ENCODE measurements at regions of chr3 and their contacts with region 1.

Region 1: DNA sequence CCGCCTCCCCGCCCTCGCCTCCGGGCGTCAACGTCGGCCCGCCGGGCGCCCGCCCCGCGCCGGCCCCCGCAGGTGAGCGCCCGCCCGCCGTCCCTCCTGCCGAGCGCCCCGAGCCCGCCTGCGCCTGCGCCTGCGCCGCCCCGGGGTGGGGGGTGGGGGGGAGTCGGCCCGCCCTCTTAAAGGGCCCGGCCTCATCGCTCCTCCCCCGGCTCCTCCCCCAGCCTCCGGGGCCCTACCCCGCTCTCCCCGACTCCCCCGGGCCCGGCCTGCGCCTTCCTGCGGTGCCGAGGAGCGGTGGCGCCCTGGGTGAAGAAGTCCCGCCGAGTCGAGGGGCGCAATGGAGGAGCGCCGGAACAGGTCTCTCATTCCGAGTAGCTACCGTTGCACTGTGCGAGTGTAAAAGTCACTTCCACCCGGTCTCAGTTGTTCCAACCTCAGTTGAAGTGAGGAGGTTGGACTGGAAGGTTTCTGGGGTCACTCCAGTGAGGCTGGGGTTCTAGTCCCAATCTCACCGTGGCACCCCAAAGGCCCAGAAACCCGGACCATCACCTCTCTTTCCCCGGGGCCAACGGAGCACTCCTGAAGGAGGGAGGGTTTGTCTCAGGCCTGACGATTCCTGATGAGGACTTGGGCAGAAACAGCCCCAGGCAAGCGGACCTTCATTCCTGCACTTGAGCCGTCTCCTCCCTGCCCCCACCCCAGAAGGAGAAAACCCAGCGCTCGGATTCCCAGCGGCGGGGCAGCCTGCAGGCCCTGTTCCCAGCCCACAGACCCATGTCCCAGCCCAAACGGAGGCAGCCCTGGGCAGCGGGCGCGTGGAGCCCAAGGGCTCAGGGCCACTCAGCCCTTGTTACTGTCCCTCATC is 1.5 kb upstream of the TNK2 start:
- DNase-seq: peak; percentile 91 to 95
- ATAC-seq: peak; percentile 91
- H3K4me3 ChIP-seq: peak overlapping the region; percentile 89 to 90
- H3K27ac ChIP-seq: peak overlapping the region in 1 of 2 donors; percentile 49
- H3K4me1 ChIP-seq: no peaks in the 10 kb centered on the region
- H3K27me3 ChIP-seq: no peaks in the 10 kb centered on the region

Region 2: GRCh38 chr3:195863121-195864006 is 46.5 kb before region 1 on chr3:
- intact Hi-C with region 1: loop called (anchors 1 kb)
- DNase-seq: peak; percentile 94 to 98
- ATAC-seq: peak; percentile 95
- H3K4me3 ChIP-seq: no peak overlapping the region
- H3K27ac ChIP-seq: peak overlapping the region; percentile 15 to 55
- H3K4me1 ChIP-seq: no peaks in the 10 kb centered on the region
- H3K27me3 ChIP-seq: no peaks in the 10 kb centered on the region

Region 3: GRCh38 chr3:195894780-195895607 is 14.9 kb before region 1 on chr3:
- intact Hi-C with region 1: loop called (anchors 2 kb)
- DNase-seq: peak; percentile 70 to 88
- ATAC-seq: peak; percentile 39
- H3K4me3 ChIP-seq: peak overlapping the region; percentile 46 to 66
- H3K27ac ChIP-seq: peak overlapping the region; percentile 56 to 76
- H3K4me1 ChIP-seq: no peaks in the 10 kb centered on the region
- H3K27me3 ChIP-seq: no peaks in the 10 kb centered on the region

Region 4: GRCh38 chr3:196063456-196063855 is 153.6 kb after region 1 on chr3:
- intact Hi-C with region 1: no loop called
- DNase-seq: no peak
- ATAC-seq: no peak
- H3K4me3 ChIP-seq: no peak overlapping the region
- H3K27ac ChIP-seq: no peak overlapping the region
- H3K4me1 ChIP-seq: no peaks in the 10 kb centered on the region
- H3K27me3 ChIP-seq: no peaks in the 10 kb centered on the region

Measured in aorta (tissue), 5 donors.